AG04450 (cell line): ENCODE measurements at regions of chr3 and their contacts with region 1.

Region 1: DNA sequence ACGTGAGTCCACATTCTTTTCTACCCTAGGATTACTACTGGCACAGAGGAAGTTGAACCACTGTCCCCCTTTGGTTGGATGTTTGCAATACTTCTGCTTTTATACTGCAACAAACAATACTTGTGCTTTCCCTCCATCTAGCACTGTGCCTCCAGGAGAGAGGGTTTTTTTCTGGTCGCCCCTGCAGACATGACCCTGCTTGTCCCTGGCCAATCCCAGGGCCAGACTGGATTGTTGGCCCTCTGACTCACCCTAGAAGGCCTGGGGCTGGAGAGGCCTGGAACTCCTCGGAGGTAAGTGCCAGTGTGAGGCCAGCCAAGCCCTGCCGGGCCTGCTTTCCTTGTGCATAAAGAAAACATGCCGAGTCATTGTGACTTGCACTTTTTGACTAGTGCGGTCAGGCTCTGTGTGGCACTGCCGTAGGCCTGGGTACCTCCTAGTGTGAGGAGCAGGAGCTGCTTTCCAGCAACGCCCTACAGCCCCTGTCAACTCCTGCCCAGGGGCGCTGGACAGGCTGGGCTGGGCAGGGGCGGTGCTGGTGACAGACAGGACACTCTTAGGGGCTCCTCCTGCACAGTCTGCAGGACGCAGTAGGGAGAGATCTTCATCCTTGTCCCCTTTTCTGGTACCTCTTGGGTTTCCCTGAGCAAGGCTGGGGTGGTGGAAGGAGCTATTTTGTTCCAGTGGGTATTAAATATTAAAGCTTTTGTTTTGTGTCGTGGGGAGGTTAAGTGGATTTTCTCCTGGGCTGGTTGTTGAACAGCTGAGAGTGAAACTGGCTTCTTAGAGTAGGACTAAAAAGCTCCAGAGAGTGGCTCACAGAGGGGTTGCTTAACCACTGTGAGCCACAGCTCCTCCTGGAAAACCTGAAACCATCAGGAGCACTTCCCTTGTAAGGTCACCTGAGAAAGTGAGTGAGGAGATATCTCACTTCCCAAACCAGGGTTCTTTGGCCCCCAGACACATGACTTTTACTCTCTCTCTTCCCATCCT is 14.4 kb upstream of the TKT start:
- DNase-seq: peak; percentile 89
- H3K4me3 ChIP-seq: no peak overlapping the region
- H3K27ac ChIP-seq: peak overlapping the region; percentile 100
- H3K27me3 ChIP-seq: no peaks in the 10 kb centered on the region
- CTCF ChIP-seq: no peak

Region 2: DNA sequence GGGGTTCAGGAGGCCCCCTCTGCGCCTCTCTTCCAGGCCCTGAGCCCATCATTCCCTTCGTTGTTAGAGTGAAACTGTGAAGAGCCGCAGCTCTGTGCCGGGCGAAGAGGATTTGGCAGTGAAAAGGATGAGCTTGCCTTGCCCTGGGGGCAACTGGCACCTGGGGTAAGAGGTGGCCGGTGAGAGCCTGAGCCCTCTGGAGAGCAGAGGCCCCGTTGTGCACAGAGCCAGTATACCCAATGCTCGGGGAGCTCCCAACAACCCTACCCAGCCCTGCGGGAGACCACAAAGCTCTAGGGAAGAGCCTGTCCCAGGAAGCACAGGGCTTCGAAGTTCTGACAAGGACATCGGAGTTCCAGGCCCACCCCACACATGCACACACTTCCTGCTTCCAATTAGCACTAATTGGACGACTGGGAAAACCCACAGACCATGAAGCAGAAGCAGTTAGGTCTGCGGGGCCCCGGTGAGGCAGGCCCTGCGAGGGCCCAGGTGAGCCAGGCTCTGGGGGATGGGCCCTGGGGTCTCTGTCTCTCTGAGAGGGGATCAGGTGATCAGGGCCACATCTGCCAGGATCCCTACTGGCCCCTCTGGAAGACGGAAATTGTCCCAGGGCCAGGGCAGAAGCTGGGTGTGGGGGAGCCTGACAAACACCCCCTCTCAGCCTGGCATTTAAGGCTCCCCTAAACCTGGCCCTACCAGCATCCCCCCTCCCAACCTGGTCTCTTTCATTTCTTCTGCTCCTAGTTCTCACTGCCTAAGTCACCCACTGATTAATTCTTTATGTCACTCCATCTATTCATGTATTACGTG is 196.4 kb before region 1 on chr3:
- CTCF ChIA-PET with region 1: no interaction called
- POLR2A ChIA-PET with region 1: no interaction called
- DNase-seq: no peak
- H3K4me3 ChIP-seq: no peak overlapping the region
- H3K27ac ChIP-seq: no peak overlapping the region
- H3K27me3 ChIP-seq: no peaks in the 10 kb centered on the region
- CTCF ChIP-seq: no peak

Region 3: DNA sequence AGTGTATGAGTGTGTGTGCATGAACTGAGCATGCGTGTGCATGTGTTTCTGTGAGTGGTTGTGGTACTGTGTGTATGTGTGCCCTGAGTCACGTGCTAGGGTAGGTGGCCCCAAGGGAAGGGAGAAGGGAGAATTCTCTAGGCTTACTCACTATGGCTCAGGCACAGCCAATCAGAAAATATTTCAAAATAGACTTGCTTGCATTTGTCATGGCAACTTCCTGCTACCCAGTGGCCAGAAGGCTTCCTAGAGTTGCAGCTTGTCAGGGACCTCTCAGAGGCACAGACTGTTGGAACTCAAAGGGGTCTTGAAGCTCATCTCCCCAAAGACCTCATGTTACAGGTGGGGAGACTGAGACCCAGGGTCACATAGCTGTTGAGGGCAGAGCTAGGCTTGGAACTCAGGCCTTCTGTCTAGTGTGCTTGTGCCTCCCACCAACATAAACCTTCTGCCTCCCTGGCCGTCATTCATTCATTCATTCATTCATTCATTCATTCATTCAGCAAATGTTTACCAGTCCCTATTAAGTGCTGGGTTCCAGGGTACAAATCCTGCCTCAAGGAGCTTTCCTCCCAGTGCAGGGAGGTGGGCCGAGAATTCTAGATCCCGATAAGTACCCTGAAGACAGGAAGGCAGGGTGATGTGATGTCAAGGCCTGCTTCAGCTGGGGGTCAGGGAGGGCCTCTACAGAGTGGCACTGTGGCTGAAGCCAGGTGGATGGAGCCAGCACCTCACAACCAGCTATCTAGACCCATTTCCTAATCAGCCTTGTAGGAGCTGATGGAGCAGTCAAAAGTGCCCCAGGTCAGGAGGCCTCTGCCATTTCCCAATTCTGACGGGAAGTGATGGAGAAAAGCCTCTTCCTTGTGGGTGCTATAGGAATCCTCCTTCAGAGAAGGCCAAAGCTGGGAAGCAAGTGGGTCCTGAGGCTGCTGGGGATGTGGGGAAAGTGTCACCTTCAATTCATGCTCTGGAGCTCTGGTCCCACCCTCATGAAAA is 129.0 kb before region 1 on chr3:
- CTCF ChIA-PET with region 1: interaction called, 10 read pairs
- POLR2A ChIA-PET with region 1: no interaction called
- DNase-seq: no peak
- H3K4me3 ChIP-seq: no peak overlapping the region
- H3K27ac ChIP-seq: no peak overlapping the region
- H3K27me3 ChIP-seq: no peaks in the 10 kb centered on the region
- CTCF ChIP-seq: no peak

Region 4: GRCh38 chr3:53195602-53196574 is 74.3 kb before region 1 on chr3:
- CTCF ChIA-PET with region 1: no interaction called
- POLR2A ChIA-PET with region 1: no interaction called
- DNase-seq: no peak
- H3K4me3 ChIP-seq: no peak overlapping the region
- H3K27ac ChIP-seq: no peak overlapping the region
- H3K27me3 ChIP-seq: no peaks in the 10 kb centered on the region
- CTCF ChIP-seq: peak; percentile 98

Region 5: GRCh38 chr3:53255775-53256703 is 14.1 kb before region 1 on chr3 and contains the start of gene TKT:
- CTCF ChIA-PET with region 1: no interaction called
- POLR2A ChIA-PET with region 1: interaction called, 13 read pairs
- DNase-seq: peak; percentile 54
- H3K4me3 ChIP-seq: peak within 1 kb of the TSS; percentile 96
- H3K27ac ChIP-seq: peak within 1 kb of the TSS; percentile 57
- H3K27me3 ChIP-seq: no peaks in the 10 kb centered on the region
- CTCF ChIP-seq: no peak
- polyA plus RNA-seq, gene TKT: 220 and 319 TPM in 2 replicates

Region 6: DNA sequence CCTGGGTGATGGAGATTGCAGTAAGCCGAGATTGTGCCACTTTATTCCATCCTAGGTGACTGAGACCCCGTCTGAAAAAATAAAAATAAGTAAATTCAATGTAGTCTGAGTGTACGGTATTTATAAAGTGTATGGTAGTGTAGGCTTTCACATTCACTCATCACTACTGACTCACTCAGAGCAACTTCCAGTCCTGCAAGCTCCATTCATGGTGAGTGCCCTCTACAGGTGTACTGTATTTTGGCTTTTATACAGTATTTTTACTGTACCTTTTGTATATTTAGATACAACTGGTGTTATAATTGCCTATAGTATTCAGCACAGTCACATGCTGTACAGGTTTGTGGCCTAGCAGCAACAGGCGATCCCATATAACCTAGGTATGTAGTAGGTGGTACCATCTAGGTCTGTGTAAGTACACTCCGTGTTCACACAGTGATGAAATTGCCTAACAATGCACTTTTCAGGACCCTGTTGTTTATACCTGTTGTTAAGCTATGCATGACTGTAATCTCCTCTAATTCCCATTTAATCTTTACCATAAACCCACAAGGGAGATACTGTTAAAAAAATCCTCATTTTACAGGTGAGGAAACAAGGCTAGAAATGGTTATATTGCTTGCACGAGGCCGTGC is 243.5 kb after region 1 on chr3:
- CTCF ChIA-PET with region 1: no interaction called
- POLR2A ChIA-PET with region 1: no interaction called
- DNase-seq: no peak
- H3K4me3 ChIP-seq: no peak overlapping the region
- H3K27ac ChIP-seq: no peak overlapping the region
- H3K27me3 ChIP-seq: peaks cover 2% of the 10 kb centered on the region
- CTCF ChIP-seq: 0 out of 2 replicates have a peak, but pooled peaks have one; percentile 17